GM10248 (cell line): ENCODE measurements at regions of chr11 and their contacts with region 1.

Region 1: GRCh38 chr11:96342961-96343711 is at the start of gene MAML2:
- DNase-seq: peak; percentile 92
- CTCF ChIP-seq: peak; percentile 78

Region 2: GRCh38 chr11:95835768-95836488 is 507.2 kb before region 1 on chr11:
- CTCF ChIA-PET with region 1: interaction called, 23 read pairs
- POLR2A ChIA-PET with region 1: no interaction called
- DNase-seq: peak; percentile 20
- CTCF ChIP-seq: peak; percentile 89

Region 3: GRCh38 chr11:96054870-96055705 is 288.0 kb before region 1 on chr11:
- CTCF ChIA-PET with region 1: interaction called, 31 read pairs
- POLR2A ChIA-PET with region 1: no interaction called
- DNase-seq: no peak
- CTCF ChIP-seq: peak; percentile 48

Region 4: GRCh38 chr11:96105197-96105895 is 237.8 kb before region 1 on chr11:
- CTCF ChIA-PET with region 1: interaction called, 14 read pairs
- POLR2A ChIA-PET with region 1: no interaction called
- DNase-seq: no peak
- CTCF ChIP-seq: no peak

Region 5: GRCh38 chr11:96267496-96268032 is 75.6 kb before region 1 on chr11:
- CTCF ChIA-PET with region 1: interaction called, 11 read pairs
- POLR2A ChIA-PET with region 1: no interaction called
- DNase-seq: peak; percentile 81
- CTCF ChIP-seq: no peak

Region 6: DNA sequence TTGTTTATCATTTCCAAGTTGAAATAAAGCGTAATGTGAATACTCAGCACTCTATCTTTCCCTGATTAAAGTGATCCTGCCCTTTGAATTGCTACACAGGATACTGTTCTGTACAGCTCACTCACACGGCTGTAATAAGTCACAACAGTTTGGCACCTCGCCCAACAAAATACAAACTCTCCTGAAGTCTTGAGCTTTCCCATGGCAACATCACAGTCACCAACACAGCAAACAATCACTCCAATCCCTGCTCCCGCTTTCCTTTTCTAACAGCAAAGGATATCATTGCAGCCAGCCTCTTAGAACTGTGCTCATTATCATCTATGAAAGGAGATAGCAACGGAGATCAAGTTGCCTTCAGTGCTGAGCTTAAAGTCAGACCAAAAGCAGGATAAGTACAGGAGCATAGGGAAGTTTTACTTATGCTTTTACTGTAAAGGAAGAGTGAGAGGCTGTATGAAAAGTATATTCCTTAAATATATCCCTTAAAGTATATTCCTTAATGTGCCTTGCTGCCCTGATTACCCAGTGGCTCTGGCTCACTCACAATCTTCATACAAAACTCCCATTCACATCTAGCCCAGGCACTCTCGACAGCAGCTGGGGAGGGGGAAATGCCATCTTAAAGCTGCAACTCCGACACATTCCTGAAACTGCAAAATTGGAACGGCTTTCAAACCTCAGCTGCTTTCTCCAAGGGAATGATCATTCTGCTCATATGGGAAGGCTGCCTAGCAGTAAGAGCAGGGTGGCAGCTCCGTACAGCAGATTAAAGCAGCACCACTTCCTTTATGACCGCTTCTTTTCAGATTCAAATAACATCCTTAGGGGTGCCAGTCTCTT is 36.0 kb before region 1 on chr11:
- CTCF ChIA-PET with region 1: interaction called, 13 read pairs
- POLR2A ChIA-PET with region 1: no interaction called
- DNase-seq: no peak
- CTCF ChIP-seq: no peak

Region 7: GRCh38 chr11:96366024-96366423 is 22.9 kb after region 1 on chr11:
- CTCF ChIA-PET with region 1: interaction called, 16 read pairs
- POLR2A ChIA-PET with region 1: no interaction called
- DNase-seq: no peak
- CTCF ChIP-seq: no peak